Activated CD8-positive, alpha-beta T cell treated with anti-CD3 and anti-CD28 coated beads, Interleukin-2, amount 10 ng/mL, durations not matched to agents 7 days and 5 days (primary cell): ENCODE measurements at regions of chr19 and their contacts with region 1.

Region 1: GRCh38 chr19:48965040-48965805 is at the start of gene FTL:
- DNase-seq: peak; percentile 94
- ATAC-seq: peak; percentile 72
- H3K4me3 Mint-ChIP-seq: peak within 1 kb of the TSS; percentile 96
- H3K27ac Mint-ChIP-seq: peak within 1 kb of the TSS; percentile 96
- H3K4me1 Mint-ChIP-seq: peaks cover 73% of the 10 kb centered on the region
- H3K27me3 Mint-ChIP-seq: no peaks in the 10 kb centered on the region
- total RNA-seq, gene FTL: 971 to 1,027 TPM

Region 2: GRCh38 chr19:48872182-48872883 is 92.9 kb before region 1 on chr19 and contains the start of gene PPP1R15A:
- CTCF ChIA-PET with region 1: interaction called, 7 read pairs
- POLR2A ChIA-PET with region 1: interaction called, 54 read pairs
- DNase-seq: peak; percentile 99
- ATAC-seq: peak; percentile 47
- H3K4me3 Mint-ChIP-seq: peak within 1 kb of the TSS; percentile 99
- H3K27ac Mint-ChIP-seq: peak within 1 kb of the TSS; percentile 98
- H3K4me1 Mint-ChIP-seq: peaks cover 42% of the 10 kb centered on the region
- H3K27me3 Mint-ChIP-seq: no peaks in the 10 kb centered on the region
- total RNA-seq, gene PPP1R15A: 104 to 124 TPM

Region 3: GRCh38 chr19:49064768-49065611 is 99.8 kb after region 1 on chr19 and contains the start of gene NTF4:
- CTCF ChIA-PET with region 1: no interaction called
- POLR2A ChIA-PET with region 1: no interaction called
- DNase-seq: no peak
- ATAC-seq: no peak
- H3K4me3 Mint-ChIP-seq: no peak within 1 kb of the TSS
- H3K27ac Mint-ChIP-seq: no peak within 1 kb of the TSS
- H3K4me1 Mint-ChIP-seq: no peaks in the 10 kb centered on the region
- H3K27me3 Mint-ChIP-seq: peaks cover 60% of the 10 kb centered on the region
- total RNA-seq, gene NTF4: not detected